Caco-2 (cell line): ENCODE measurements at regions of chr17 and their contacts with region 1.

Region 1: GRCh38 chr17:65794572-65794971 is 233.1 kb upstream of the AXIN2 start:
- DNase-seq: peak; percentile 51 to 52
- H3K4me3 ChIP-seq: no peak overlapping the region
- H3K4me3 Mint-ChIP-seq: no peak overlapping the region
- H3K27ac Mint-ChIP-seq: no peak overlapping the region
- H3K4me1 ChIP-seq: no peaks in the 10 kb centered on the region
- H3K4me1 Mint-ChIP-seq: peaks cover 6% of the 10 kb centered on the region
- H3K27me3 ChIP-seq: no peaks in the 10 kb centered on the region
- H3K27me3 Mint-ChIP-seq: no peaks in the 10 kb centered on the region
- CTCF ChIP-seq: peak; percentile 70 to 75

Region 2: GRCh38 chr17:64728041-64728751 is 1066.4 kb before region 1 on chr17:
- CTCF ChIA-PET with region 1: no interaction called
- POLR2A ChIA-PET with region 1: no interaction called
- intact Hi-C with region 1: no loop called
- DNase-seq: no peak
- H3K4me3 ChIP-seq: no peak overlapping the region
- H3K4me3 Mint-ChIP-seq: no peak overlapping the region
- H3K27ac Mint-ChIP-seq: no peak overlapping the region
- H3K4me1 ChIP-seq: no peaks in the 10 kb centered on the region
- H3K4me1 Mint-ChIP-seq: no peaks in the 10 kb centered on the region
- H3K27me3 ChIP-seq: no peaks in the 10 kb centered on the region
- H3K27me3 Mint-ChIP-seq: no peaks in the 10 kb centered on the region
- CTCF ChIP-seq: no peak

Region 3: GRCh38 chr17:65231662-65232335 is 562.8 kb before region 1 on chr17:
- CTCF ChIA-PET with region 1: no interaction called
- POLR2A ChIA-PET with region 1: no interaction called
- intact Hi-C with region 1: loop called (anchors 5 kb)
- DNase-seq: peak; percentile 65 to 77
- H3K4me3 ChIP-seq: no peak overlapping the region
- H3K4me3 Mint-ChIP-seq: no peak overlapping the region
- H3K27ac Mint-ChIP-seq: no peak overlapping the region
- H3K4me1 ChIP-seq: peaks cover 15% of the 10 kb centered on the region
- H3K4me1 Mint-ChIP-seq: peaks cover 27% of the 10 kb centered on the region
- H3K27me3 ChIP-seq: no peaks in the 10 kb centered on the region
- H3K27me3 Mint-ChIP-seq: peaks cover 1% of the 10 kb centered on the region
- CTCF ChIP-seq: peak; percentile 76 to 88

Region 4: DNA sequence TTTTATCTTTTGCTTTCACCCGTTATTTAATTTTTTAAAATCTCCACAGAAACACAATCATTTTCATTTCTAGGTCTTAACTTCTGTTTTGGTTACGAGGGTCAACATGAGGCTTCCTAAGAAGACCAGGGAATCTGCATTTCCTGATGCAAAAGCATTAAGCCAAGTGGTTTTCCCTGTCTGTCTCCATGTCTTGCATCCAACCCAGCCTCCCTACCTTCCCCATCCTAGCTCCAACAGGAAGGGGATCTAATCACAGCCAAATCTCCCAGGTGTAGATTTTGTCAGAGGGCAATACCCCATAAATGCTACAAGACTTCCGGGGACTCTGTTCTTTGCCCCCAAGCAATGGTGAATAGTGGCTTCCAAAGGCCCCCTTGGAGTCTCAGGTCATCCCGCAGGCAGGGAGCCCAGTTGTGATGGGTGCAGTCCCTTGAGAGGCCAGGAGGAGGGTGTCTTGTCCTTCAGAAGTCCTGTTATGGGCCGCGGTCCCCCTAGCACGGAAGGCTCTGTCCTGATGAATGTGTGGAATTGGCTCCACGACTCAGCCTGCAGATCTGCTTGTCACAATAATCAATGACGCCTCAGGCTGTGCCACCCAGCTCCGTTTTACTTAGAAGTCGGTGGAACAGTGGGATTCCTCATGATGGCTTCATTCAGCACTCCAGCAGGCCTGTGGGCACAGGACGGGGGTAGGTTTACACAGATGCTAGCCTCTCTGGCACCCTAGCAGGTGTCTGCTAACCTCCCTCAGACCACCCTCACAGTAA is 516.3 kb before region 1 on chr17:
- CTCF ChIA-PET with region 1: no interaction called
- POLR2A ChIA-PET with region 1: no interaction called
- intact Hi-C with region 1: loop called (anchors 1 kb)
- DNase-seq: peak; percentile 81 to 82
- H3K4me3 ChIP-seq: no peak overlapping the region
- H3K4me3 Mint-ChIP-seq: peak overlapping the region; percentile 39
- H3K27ac Mint-ChIP-seq: no peak overlapping the region
- H3K4me1 ChIP-seq: peaks cover 14% of the 10 kb centered on the region; the same call in 1 of the 2 replicates
- H3K4me1 Mint-ChIP-seq: peaks cover 9% of the 10 kb centered on the region
- H3K27me3 ChIP-seq: no peaks in the 10 kb centered on the region
- H3K27me3 Mint-ChIP-seq: peaks cover 4% of the 10 kb centered on the region
- CTCF ChIP-seq: peak; percentile 82 to 89

Region 5: DNA sequence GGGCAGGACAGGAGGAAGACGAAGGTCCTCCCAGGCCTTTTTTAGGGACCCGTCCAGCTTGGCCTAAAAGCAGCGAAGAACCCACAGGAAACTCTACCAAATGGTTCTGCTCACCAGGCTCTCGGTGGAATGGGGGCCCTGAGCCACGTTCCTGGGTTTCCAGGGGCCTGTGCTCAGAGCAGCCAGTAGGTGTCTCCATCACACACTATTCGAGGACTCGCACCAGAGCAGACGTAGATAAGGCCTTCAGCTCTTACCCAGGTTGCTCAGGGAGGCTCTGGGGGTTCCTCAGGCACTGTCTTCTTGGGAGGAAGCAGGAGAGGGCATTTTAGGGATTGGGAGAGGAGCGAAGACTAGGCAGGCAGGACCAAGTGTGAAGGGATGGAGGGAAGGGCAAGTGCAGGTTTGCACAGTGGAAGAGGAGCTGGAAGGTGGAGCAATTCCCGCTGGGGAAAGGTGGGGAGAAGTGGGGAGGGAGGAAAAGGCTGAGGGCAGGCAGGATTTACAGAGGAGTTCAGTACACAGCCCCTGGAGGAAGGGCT is 500.3 kb before region 1 on chr17:
- CTCF ChIA-PET with region 1: no interaction called
- POLR2A ChIA-PET with region 1: no interaction called
- intact Hi-C with region 1: loop called (anchors 5 kb)
- DNase-seq: peak; percentile 74 to 78
- H3K4me3 ChIP-seq: no peak overlapping the region
- H3K4me3 Mint-ChIP-seq: no peak overlapping the region
- H3K27ac Mint-ChIP-seq: peak overlapping the region; percentile 25
- H3K4me1 ChIP-seq: peaks cover 13% of the 10 kb centered on the region; the same call in 1 of the 2 replicates
- H3K4me1 Mint-ChIP-seq: peaks cover 15% of the 10 kb centered on the region
- H3K27me3 ChIP-seq: no peaks in the 10 kb centered on the region
- H3K27me3 Mint-ChIP-seq: no peaks in the 10 kb centered on the region
- CTCF ChIP-seq: peak; percentile 88 to 90